ENCODE measurements at regions of chr3 and their contacts with region 1.

Region 1: GRCh38 chr3:67113802-67114407 is 115.8 kb downstream of the KBTBD8 start:
- DNase-seq: peak; percentile 58 to 84 (median 77)
- ATAC-seq: peak; percentile 96
- H3K4me3 ChIP-seq: no peak overlapping the region
- H3K4me3 Mint-ChIP-seq: no peak overlapping the region
- H3K27ac ChIP-seq: no peak overlapping the region
- H3K27ac Mint-ChIP-seq: no peak overlapping the region
- H3K4me1 ChIP-seq: no peaks in the 10 kb centered on the region
- H3K4me1 Mint-ChIP-seq: no peaks in the 10 kb centered on the region
- H3K27me3 ChIP-seq: no peaks in the 10 kb centered on the region
- H3K27me3 Mint-ChIP-seq: peaks cover 16% of the 10 kb centered on the region
- CTCF ChIP-seq: peak; percentile 78

Region 2: GRCh38 chr3:66971891-66972551 is 141.9 kb before region 1 on chr3:
- CTCF ChIA-PET with region 1: interaction called, 34 read pairs
- POLR2A ChIA-PET with region 1: interaction called, 3 read pairs
- intact Hi-C with region 1: loop called (anchors 1 to 2 kb)
- DNase-seq: peak; percentile 16 to 77 (median 55)
- ATAC-seq: peak; percentile 89
- H3K4me3 ChIP-seq: peak overlapping the region; percentile 46 to 70
- H3K4me3 Mint-ChIP-seq: peak overlapping the region; percentile 87
- H3K27ac ChIP-seq: peak overlapping the region in 1 of 2 experiments; percentile 33
- H3K27ac Mint-ChIP-seq: peak overlapping the region; percentile 77
- H3K4me1 ChIP-seq: peaks cover 8% of the 10 kb centered on the region
- H3K4me1 Mint-ChIP-seq: peaks cover 8% of the 10 kb centered on the region
- H3K27me3 ChIP-seq: no peaks in the 10 kb centered on the region
- H3K27me3 Mint-ChIP-seq: peaks cover 4% of the 10 kb centered on the region
- CTCF ChIP-seq: peak; percentile 89

Region 3: GRCh38 chr3:67123914-67124313 is 10.0 kb after region 1 on chr3:
- CTCF ChIA-PET with region 1: interaction called, 19 read pairs
- POLR2A ChIA-PET with region 1: no interaction called
- intact Hi-C with region 1: no loop called
- DNase-seq: no peak
- ATAC-seq: no peak
- H3K4me3 ChIP-seq: no peak overlapping the region
- H3K4me3 Mint-ChIP-seq: no peak overlapping the region
- H3K27ac ChIP-seq: no peak overlapping the region
- H3K27ac Mint-ChIP-seq: no peak overlapping the region
- H3K4me1 ChIP-seq: no peaks in the 10 kb centered on the region
- H3K4me1 Mint-ChIP-seq: no peaks in the 10 kb centered on the region
- H3K27me3 ChIP-seq: peaks cover 0 to 3% of the 10 kb centered on the region in 2 experiments
- H3K27me3 Mint-ChIP-seq: peaks cover 8% of the 10 kb centered on the region
- CTCF ChIP-seq: no peak

Region 4: GRCh38 chr3:67790043-67790442 is 676.1 kb after region 1 on chr3:
- CTCF ChIA-PET with region 1: interaction called, 36 read pairs
- POLR2A ChIA-PET with region 1: no interaction called
- intact Hi-C with region 1: loop called (anchors 1 to 2 kb)
- DNase-seq: peak; percentile 47 to 85 (median 64)
- ATAC-seq: peak; percentile 78
- H3K4me3 ChIP-seq: no peak overlapping the region
- H3K4me3 Mint-ChIP-seq: no peak overlapping the region
- H3K27ac ChIP-seq: no peak overlapping the region
- H3K27ac Mint-ChIP-seq: no peak overlapping the region
- H3K4me1 ChIP-seq: peaks cover 6% of the 10 kb centered on the region
- H3K4me1 Mint-ChIP-seq: peaks cover 13% of the 10 kb centered on the region
- H3K27me3 ChIP-seq: no peaks in the 10 kb centered on the region
- H3K27me3 Mint-ChIP-seq: no peaks in the 10 kb centered on the region
- CTCF ChIP-seq: peak; percentile 70

Region 5: GRCh38 chr3:68306571-68306970 is 1192.7 kb after region 1 on chr3:
- CTCF ChIA-PET with region 1: no interaction called
- POLR2A ChIA-PET with region 1: no interaction called
- intact Hi-C with region 1: loop called in 1 of 2 experiments (anchors 10 kb)
- DNase-seq: peak in 3 of 9 experiments; percentile 7 to 30 (median 13)
- ATAC-seq: no peak
- H3K4me3 ChIP-seq: no peak overlapping the region
- H3K4me3 Mint-ChIP-seq: no peak overlapping the region
- H3K27ac ChIP-seq: no peak overlapping the region
- H3K27ac Mint-ChIP-seq: no peak overlapping the region
- H3K4me1 ChIP-seq: no peaks in the 10 kb centered on the region
- H3K4me1 Mint-ChIP-seq: no peaks in the 10 kb centered on the region
- H3K27me3 ChIP-seq: no peaks in the 10 kb centered on the region
- H3K27me3 Mint-ChIP-seq: no peaks in the 10 kb centered on the region
- CTCF ChIP-seq: no peak

Region 6: DNA sequence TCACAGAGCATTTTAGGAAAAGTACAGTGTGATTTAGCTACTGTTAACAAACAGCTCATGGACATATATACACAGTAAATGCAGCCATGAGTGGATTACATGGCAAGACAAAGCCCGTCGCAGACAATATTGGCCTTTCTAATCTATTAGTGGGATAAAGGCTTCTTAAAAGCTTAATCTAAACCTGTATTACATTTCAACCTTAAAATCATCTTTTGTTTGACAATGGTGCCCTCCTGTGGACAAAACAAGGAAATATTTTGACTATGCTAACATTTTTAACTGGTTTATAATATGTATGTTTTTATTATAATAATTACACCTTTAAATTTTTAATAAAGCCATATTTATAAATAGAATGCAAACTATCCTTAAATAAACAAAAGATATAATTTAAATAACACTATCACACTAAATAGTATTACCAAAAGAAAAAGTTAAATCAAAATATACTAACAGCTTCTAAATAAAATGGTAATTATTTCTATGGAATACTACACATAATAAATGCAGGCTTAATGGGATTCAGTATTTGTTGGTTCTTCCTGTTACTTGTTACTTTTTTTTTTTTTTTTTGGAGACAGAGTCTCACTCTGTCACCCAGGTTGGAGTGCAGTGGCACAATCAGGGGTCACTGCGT is 1779.8 kb after region 1 on chr3:
- CTCF ChIA-PET with region 1: interaction called, 6 read pairs
- POLR2A ChIA-PET with region 1: no interaction called
- intact Hi-C with region 1: loop called (anchors 1 to 5 kb)
- DNase-seq: peak in 3 of 9 experiments; percentile 16 to 56 (median 47)
- ATAC-seq: no peak
- H3K4me3 ChIP-seq: no peak overlapping the region
- H3K4me3 Mint-ChIP-seq: no peak overlapping the region
- H3K27ac ChIP-seq: no peak overlapping the region
- H3K27ac Mint-ChIP-seq: no peak overlapping the region
- H3K4me1 ChIP-seq: no peaks in the 10 kb centered on the region
- H3K4me1 Mint-ChIP-seq: no peaks in the 10 kb centered on the region
- H3K27me3 ChIP-seq: no peaks in the 10 kb centered on the region
- H3K27me3 Mint-ChIP-seq: no peaks in the 10 kb centered on the region
- CTCF ChIP-seq: peak; percentile 66